HepG2 (cell line): ENCODE measurements at regions of chr11 and their contacts with region 1.

Region 1: DNA sequence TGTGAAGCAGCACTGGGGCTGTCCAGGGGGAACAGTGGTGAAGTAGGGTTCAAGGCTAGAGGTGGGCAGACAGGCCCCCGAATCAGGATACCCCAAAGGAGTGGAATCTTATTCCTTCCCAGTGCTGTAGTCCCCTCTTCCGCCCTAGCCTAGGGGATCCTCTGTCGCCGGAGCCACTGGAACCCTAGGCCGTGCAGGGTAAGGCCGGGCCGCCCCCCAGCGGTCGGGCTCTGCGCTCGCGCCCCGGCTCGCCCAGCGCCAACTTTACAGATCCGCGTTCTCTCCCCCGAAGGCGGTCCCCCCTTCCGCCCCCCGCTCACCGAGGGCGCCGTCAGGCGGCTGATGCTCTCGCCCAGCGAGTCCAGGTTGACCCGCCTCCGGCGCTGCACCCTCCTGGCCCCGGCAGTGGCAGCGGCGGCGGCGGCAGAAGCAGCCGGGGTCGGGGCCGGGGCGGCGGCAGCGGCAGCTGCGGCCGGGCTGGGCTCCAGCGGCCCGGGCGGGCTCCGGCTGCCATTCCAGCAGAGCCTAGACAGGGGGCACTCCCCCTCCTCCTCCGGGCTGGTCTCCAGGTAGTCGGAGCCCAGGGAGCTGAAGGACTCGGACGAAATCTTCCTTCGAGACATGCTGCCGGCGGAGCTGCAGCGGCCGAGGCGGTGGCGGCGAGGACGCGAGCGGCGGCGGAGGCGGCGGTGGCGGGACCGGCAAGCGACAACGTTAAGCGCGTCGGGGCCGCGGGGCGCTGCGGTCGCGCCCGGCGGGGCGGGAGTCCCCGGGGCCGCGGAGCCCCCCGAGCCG is 646 bp downstream of the GUCY1A2 start:
- DNase-seq: peak; percentile 2
- ATAC-seq: peak; percentile 89
- H3K4me3 ChIP-seq: peak overlapping the region; percentile 54 to 73 (median 60); a peak in 4 of 6 replicates
- H3K27ac ChIP-seq: no peak overlapping the region
- H3K4me1 ChIP-seq: peaks cover 13% of the 10 kb centered on the region
- H3K27me3 ChIP-seq: peaks cover 4 to 22% of the 10 kb centered on the region in 2 experiments; a peak in 4 of 5 replicates
- CTCF ChIP-seq: peak; percentile 69
- EP300 ChIP-seq: no peak
- POLR2A ChIP-seq: no peak
- RAD21 ChIP-seq: no peak

Region 2: GRCh38 chr11:106306942-106307341 is 710.7 kb before region 1 on chr11:
- CTCF ChIA-PET with region 1: no interaction called
- POLR2A ChIA-PET with region 1: no interaction called
- in situ Hi-C with region 1: no loop called
- intact Hi-C with region 1: loop called (anchors 5 kb)
- DNase-seq: no peak
- ATAC-seq: no peak
- H3K4me3 ChIP-seq: no peak overlapping the region
- H3K27ac ChIP-seq: no peak overlapping the region
- H3K4me1 ChIP-seq: no peaks in the 10 kb centered on the region
- H3K27me3 ChIP-seq: no peaks in the 10 kb centered on the region
- CTCF ChIP-seq: no peak
- EP300 ChIP-seq: no peak
- POLR2A ChIP-seq: no peak
- RAD21 ChIP-seq: no peak

Region 3: DNA sequence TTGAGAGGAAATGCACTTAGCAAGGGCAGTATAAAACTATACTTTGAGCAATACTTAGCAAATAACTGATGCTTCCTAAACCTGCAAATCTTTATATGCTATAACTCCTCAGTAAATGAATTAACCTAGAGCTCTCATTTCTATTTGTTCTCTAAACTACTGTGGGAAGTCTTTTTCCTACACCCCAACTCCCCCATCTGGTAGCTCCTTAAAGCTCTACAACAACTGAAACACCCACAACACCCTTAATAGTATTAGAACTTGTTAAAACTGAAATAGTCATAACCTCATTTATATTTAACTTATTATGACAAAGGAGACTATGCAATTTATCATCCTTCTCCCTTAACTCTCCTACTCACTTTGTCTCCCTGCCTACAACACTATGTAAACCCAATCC is 42.8 kb before region 1 on chr11:
- CTCF ChIA-PET with region 1: no interaction called
- POLR2A ChIA-PET with region 1: no interaction called
- in situ Hi-C with region 1: no loop called
- intact Hi-C with region 1: no loop called
- DNase-seq: no peak
- ATAC-seq: no peak
- H3K4me3 ChIP-seq: no peak overlapping the region
- H3K27ac ChIP-seq: no peak overlapping the region
- H3K4me1 ChIP-seq: no peaks in the 10 kb centered on the region
- H3K27me3 ChIP-seq: no peaks in the 10 kb centered on the region
- CTCF ChIP-seq: no peak
- EP300 ChIP-seq: no peak
- POLR2A ChIP-seq: no peak
- RAD21 ChIP-seq: no peak